CD4-positive, alpha-beta memory T cell (primary cell): ENCODE measurements at regions of chr15 and their contacts with region 1.

Region 1: DNA sequence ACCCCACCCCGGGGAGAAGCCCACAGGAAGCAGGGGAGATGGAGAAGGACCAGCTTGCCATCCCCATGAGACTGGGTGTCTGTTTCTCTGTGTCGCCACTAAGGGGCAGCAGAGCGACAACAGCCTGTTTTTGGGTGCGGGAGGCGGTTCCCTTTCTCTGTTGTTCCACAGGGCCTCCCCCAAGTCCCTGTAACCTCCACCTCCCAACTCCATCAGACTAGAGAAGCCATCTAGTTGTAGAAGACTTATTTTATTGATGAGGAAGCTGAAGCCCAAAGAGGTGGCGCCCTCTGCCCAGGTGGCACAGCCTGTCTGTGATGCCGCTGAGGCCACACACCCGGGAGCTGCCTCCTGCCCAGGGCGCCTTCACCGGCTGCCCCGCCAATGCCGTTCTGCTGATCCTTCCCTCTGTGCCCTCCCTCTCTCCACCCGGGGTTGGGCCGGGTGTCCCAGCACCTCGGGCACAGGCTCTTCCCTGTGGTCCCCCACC is 3.9 kb upstream of the CCDC9B start:
- DNase-seq: peak; percentile 68 to 71 (median 68)
- H3K4me3 ChIP-seq: no peak overlapping the region
- H3K4me3 Mint-ChIP-seq: no peak overlapping the region
- H3K27ac ChIP-seq: no peak overlapping the region
- H3K27ac Mint-ChIP-seq: no peak overlapping the region
- H3K4me1 ChIP-seq: peaks cover 7% of the 10 kb centered on the region
- H3K4me1 Mint-ChIP-seq: peaks cover 0 to 3% (median under 1%) of the 10 kb centered on the region in 4 donors
- H3K27me3 ChIP-seq: no peaks in the 10 kb centered on the region
- H3K27me3 Mint-ChIP-seq: no peaks in the 10 kb centered on the region

Region 2: DNA sequence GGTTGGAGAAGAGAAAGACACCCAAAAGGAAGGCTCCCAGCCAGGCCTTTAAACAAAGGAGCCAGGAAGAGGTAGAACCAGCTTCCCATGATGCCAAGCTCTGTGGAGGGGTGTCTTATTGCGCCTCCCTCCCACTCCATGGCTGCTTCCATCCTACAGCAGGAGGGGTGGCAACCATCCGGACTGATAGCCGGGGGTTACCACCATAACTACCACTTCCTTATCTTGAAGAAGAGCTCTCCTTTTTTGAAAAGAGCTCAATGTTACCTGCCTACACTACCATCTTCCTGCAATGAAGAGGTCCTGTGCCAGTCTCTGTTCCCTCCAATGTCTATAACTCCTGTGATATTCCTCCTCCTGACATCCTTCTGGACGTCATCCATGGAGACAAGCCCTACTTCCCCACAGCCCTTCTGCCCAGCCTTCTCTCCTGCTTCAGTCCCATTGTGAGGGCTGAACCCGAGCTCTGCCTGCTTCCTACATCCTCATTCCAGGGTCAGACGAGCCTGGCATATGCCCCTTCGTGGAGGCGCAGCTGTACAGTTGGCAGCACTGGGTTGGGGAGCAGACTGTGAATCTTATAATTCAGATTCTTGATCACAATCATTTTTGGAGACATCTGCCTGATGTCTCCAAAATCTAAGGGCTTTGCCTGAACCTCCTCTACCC is 12.4 kb before region 1 on chr15:
- CTCF ChIA-PET with region 1: interaction called, 96 read pairs
- POLR2A ChIA-PET with region 1: no interaction called
- intact Hi-C with region 1: no loop called
- DNase-seq: no peak
- H3K4me3 ChIP-seq: no peak overlapping the region
- H3K4me3 Mint-ChIP-seq: no peak overlapping the region
- H3K27ac ChIP-seq: no peak overlapping the region
- H3K27ac Mint-ChIP-seq: no peak overlapping the region
- H3K4me1 ChIP-seq: peaks cover 8% of the 10 kb centered on the region
- H3K4me1 Mint-ChIP-seq: peaks cover 5 to 12% (median 6%) of the 10 kb centered on the region in 4 donors
- H3K27me3 ChIP-seq: no peaks in the 10 kb centered on the region
- H3K27me3 Mint-ChIP-seq: no peaks in the 10 kb centered on the region

Region 3: GRCh38 chr15:40382580-40383456 is 38.1 kb after region 1 on chr15 and contains the start of gene KNSTRN:
- CTCF ChIA-PET with region 1: interaction called, 13 read pairs
- POLR2A ChIA-PET with region 1: interaction called, 3 read pairs
- intact Hi-C with region 1: no loop called
- DNase-seq: peak; percentile 90 to 95 (median 91)
- H3K4me3 ChIP-seq: peak within 1 kb of the TSS; percentile 67 to 88
- H3K4me3 Mint-ChIP-seq: peak within 1 kb of the TSS; percentile 92 to 99 (median 96)
- H3K27ac ChIP-seq: peak within 1 kb of the TSS; percentile 69
- H3K27ac Mint-ChIP-seq: peak within 1 kb of the TSS; percentile 71 to 93 (median 88)
- H3K4me1 ChIP-seq: peaks cover 11% of the 10 kb centered on the region
- H3K4me1 Mint-ChIP-seq: peaks cover 10 to 20% (median 16%) of the 10 kb centered on the region in 4 donors
- H3K27me3 ChIP-seq: no peaks in the 10 kb centered on the region
- H3K27me3 Mint-ChIP-seq: peaks cover 0 to 2% of the 10 kb centered on the region in 2 donors
- total RNA-seq, gene KNSTRN: 6.8 to 8.8 TPM

Region 4: GRCh38 chr15:40405501-40406381 is 61.1 kb after region 1 on chr15 and contains the start of gene IVD:
- CTCF ChIA-PET with region 1: interaction called, 17 read pairs
- POLR2A ChIA-PET with region 1: no interaction called
- intact Hi-C with region 1: no loop called
- DNase-seq: peak; percentile 78 to 82 (median 80)
- H3K4me3 ChIP-seq: peak within 1 kb of the TSS; percentile 42 to 63
- H3K4me3 Mint-ChIP-seq: peak within 1 kb of the TSS; percentile 82 to 98 (median 90)
- H3K27ac ChIP-seq: peak within 1 kb of the TSS; percentile 61
- H3K27ac Mint-ChIP-seq: peak within 1 kb of the TSS; percentile 62 to 92 (median 86)
- H3K4me1 ChIP-seq: peaks cover 25% of the 10 kb centered on the region
- H3K4me1 Mint-ChIP-seq: peaks cover 24 to 35% (median 30%) of the 10 kb centered on the region in 4 donors
- H3K27me3 ChIP-seq: no peaks in the 10 kb centered on the region
- H3K27me3 Mint-ChIP-seq: no peaks in the 10 kb centered on the region
- total RNA-seq, gene IVD: 56.4 to 62.2 TPM

Region 5: DNA sequence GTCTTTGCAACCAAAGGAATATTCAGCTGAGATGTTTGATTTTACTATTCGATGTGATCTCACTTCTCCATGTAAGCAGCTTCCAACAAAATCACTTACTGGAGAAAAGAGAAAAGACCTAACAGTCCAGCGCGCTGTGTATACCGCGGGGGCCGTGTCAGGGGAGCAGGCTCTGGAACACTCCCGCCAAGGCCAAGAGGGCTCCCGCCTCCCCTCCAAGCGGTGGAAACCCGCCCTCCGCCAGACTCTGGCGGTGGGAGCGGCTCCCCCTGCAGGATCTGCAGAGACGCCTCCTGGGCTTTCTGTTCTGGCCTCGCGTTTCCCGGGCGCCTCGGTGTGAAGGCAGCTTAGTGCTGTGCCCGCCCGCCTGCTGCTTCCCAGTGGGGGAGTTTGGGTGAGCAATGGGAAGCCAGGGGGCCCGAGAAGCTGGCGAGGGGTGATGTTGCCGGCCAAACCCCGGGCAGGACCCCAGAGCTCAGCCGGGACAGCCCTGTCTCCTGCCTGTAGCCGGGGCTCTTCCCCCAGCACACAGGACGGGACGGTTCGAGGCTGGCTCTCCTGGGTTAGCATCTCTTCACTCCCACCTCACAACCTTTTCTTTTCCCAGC is 162.4 kb after region 1 on chr15:
- CTCF ChIA-PET with region 1: interaction called, 3 read pairs
- POLR2A ChIA-PET with region 1: no interaction called
- intact Hi-C with region 1: loop called (anchors 1 kb)
- DNase-seq: peak; percentile 44 to 64 (median 47)
- H3K4me3 ChIP-seq: peak overlapping the region in 1 of 2 donors; percentile 22
- H3K4me3 Mint-ChIP-seq: peak overlapping the region in 6 of 8 donors; percentile 12 to 74 (median 54)
- H3K27ac ChIP-seq: no peak overlapping the region
- H3K27ac Mint-ChIP-seq: no peak overlapping the region
- H3K4me1 ChIP-seq: peaks cover 24% of the 10 kb centered on the region
- H3K4me1 Mint-ChIP-seq: peaks cover 9 to 20% (median 14%) of the 10 kb centered on the region in 4 donors
- H3K27me3 ChIP-seq: peaks cover 31% of the 10 kb centered on the region
- H3K27me3 Mint-ChIP-seq: peaks cover 30 to 48% of the 10 kb centered on the region in 2 donors

Region 6: DNA sequence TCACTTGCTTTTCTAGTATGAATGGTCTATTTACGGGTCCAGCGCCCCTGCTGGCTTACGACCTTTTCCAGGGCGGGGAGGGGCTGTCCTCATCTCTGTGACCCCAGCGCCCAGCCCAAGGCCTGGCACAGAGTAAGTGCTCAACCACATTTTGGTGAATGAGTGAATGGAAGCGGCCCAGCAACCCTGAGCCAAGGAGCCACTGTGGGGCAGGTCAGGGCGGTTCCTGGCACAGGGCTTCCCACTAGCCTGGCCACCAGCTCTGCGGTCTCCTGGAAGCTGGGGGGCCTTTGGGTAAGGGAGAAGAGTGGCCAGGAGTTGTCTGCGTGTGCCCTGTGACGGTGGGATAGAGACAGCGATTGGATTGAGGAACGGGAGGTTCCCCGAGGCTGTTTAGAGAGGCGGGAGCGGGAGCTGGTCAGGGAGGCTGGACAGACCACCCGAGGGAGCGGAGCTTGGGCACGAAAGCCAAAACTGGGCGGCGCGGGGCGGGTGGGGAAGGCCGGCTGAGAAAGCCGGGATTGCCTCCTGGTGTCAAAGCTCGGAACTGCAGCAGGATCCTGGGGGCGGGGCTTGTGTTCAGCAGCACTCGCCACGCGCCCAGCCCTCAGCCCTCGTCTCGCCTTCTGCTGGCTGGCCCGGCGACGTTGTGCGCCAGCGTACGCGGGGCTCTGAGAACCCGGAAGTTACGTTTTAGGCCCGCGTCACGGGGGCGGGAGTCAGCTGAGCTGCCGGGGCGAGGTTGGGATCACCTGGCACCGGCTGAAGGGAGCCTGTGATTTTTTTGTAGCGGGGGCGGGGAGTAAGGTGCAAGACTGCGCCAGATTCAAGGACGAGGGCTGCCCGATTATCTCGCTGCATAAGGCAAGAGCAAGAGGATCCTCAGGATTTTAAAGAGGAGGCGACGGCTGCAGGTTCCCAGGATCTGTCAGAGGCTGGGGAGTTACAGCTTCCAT is 549.3 kb after region 1 on chr15 and contains the start of gene VPS18:
- CTCF ChIA-PET with region 1: no interaction called
- POLR2A ChIA-PET with region 1: no interaction called
- intact Hi-C with region 1: no loop called
- DNase-seq: peak; percentile 97 to 98 (median 98)
- H3K4me3 ChIP-seq: peak within 1 kb of the TSS; percentile 53 to 86
- H3K4me3 Mint-ChIP-seq: peak within 1 kb of the TSS; percentile 95 to 100 (median 99)
- H3K27ac ChIP-seq: peak within 1 kb of the TSS; percentile 86
- H3K27ac Mint-ChIP-seq: peak within 1 kb of the TSS; percentile 95 to 99 (median 99)
- H3K4me1 ChIP-seq: peaks cover 21% of the 10 kb centered on the region
- H3K4me1 Mint-ChIP-seq: peaks cover 24 to 52% (median 36%) of the 10 kb centered on the region in 4 donors
- H3K27me3 ChIP-seq: no peaks in the 10 kb centered on the region
- H3K27me3 Mint-ChIP-seq: no peaks in the 10 kb centered on the region
- total RNA-seq, gene VPS18: 18.4 to 20.3 TPM